Mucosa of descending colon (tissue), 3 donors: ENCODE measurements at regions of chr14 and their contacts with region 1.

Region 1: DNA sequence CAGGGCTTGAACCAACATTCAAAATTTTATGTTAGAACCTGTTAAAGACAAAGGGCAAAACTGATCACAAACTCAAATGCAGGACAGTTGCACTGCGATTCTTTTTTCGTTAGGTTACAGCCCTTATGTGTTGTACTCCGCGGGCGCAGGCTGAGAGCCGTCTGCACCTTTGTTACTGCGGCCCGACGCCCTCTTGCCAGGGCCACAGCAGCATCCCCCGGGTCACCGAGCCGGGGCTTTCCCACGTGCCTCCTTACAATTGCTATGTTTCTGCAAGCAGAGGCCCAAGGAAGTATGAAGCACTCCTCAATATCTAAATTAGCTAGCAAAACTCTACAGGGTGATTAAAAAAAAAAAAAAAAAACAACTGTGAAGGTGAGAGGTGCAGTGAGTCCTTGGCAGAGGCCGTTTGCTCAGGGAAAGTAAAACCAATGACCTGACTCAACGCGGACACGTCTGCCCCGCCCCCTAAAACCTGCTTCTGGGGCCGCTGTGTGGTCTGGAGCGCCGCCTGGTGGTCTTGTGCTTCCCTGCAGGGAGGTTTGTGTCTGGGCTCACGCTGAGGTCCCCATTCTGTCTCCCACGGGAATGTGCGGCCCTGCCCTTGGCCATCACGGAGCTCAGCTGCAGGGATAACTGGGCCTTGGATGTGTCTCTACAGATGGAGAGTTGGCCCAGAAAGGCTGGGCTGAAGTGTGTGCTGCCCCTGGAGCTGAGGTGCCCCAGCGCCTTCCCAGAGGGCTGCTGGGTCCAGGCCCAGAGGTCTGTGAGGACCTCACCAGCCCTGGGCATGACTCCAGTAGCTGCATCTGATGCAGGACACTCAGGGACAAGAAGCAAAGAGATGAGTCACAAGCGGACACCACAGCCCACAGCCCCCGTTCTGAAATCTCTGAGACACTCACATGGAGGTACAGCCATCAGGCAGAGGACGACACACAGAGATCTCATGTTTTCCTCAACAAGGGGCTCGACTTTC is 418.5 kb downstream of the TMEM121 start:
- DNase-seq: peak; percentile 74 to 86 (median 81)
- ATAC-seq: peak; percentile 94
- H3K4me3 ChIP-seq: no peak overlapping the region
- H3K4me1 ChIP-seq: peaks cover 2% of the 10 kb centered on the region
- CTCF ChIP-seq: peak; percentile 55

Region 2: DNA sequence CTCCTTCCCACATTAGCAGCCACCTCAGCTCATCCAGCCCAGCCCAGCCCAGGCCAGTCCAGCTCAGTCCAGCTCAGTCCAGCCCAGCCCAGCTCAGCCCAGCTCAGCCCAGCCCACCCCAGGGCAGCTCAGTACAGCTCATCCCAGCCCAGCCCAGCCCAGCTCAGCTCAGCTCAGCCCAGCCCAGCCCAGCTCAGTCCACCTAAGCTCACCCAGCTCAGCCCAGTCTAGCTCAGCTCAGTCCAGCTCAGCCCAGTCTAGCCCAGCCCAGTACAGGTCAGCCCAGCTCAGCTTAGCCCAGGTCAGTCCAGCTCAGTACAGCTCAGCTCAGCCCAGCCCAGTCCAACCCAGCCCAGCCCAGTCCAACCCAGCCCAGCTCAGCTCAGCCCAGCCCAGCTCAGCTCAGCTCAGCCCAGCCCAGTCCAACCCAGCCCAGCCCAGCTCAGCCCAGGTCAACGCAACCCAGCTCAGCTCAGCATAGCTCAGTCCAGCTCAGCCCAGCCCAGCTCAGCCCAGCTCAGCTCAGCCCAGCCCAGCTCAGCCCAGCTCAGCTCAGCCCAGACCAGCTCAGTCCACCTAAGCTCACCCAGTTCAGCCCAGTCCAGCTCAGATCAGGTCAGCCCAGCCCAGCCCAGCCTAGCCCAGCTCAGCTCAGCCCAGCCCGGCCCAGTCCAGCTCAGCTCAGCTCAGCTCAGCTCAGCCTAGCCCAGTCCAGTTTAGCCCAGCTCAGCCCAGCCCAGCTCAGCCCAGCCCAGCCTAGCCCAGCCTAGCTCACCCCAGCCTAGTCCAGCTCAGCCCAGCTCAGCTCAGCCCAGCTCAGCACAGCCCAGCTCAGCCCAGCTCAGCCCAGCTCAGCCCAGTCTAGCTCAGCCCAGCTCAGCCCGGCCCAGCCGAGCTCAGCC is 355.5 kb before region 1 on chr14:
- intact Hi-C with region 1: no loop called
- DNase-seq: peak in 1 of 3 donors; percentile 52
- ATAC-seq: no peak
- H3K4me3 ChIP-seq: no peak overlapping the region
- H3K4me1 ChIP-seq: no peaks in the 10 kb centered on the region
- CTCF ChIP-seq: no peak

Region 3: GRCh38 chr14:105682940-105683570 is 261.9 kb before region 1 on chr14:
- intact Hi-C with region 1: loop called in 1 of 2 experiments (anchors 10 kb)
- DNase-seq: no peak
- ATAC-seq: no peak
- H3K4me3 ChIP-seq: no peak overlapping the region
- H3K4me1 ChIP-seq: no peaks in the 10 kb centered on the region
- CTCF ChIP-seq: no peak

Region 4: DNA sequence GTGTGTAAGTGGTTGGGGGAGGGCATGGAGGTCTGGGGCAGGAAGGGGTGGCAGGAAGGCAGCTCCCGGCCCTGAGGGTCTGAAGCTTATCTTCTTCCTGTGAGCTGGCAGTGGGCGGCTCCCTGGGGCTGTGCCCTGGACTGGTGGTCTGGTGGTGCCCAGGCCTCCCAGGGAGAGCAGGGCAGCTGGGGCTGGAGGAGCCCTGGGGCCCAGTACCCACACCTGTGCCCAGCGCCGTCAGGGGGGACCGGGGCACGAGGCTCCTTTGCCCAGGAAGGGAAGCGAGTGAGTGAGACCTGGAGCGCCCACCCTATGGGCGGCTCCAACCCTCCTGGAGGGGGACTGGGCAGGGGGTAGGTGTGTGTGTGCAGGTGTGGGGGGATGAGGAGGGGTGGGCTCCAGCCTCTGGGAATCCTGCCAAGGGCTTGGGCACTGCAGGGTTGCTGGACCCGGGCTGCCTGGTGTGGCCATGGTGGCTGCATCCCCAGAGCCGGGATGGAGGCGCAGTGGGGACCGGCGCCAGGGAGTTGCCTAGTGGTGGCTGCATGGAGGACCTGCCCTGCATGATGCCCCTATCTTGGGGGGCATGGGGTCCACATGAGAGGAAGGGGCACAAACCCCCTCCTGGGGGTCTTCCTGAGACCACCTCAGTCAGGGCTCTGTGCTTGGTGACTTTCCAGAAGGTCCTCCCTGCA is 64.9 kb before region 1 on chr14:
- intact Hi-C with region 1: no loop called
- DNase-seq: peak in 2 of 3 donors; percentile 6 to 37
- ATAC-seq: no peak
- H3K4me3 ChIP-seq: no peak overlapping the region
- H3K4me1 ChIP-seq: no peaks in the 10 kb centered on the region
- CTCF ChIP-seq: no peak

Region 5: GRCh38 chr14:106268013-106268727 is 323.2 kb after region 1 on chr14:
- intact Hi-C with region 1: no loop called
- DNase-seq: peak; percentile 49 to 56 (median 50)
- ATAC-seq: no peak
- H3K4me3 ChIP-seq: no peak overlapping the region
- H3K4me1 ChIP-seq: no peaks in the 10 kb centered on the region
- CTCF ChIP-seq: no peak